ENCODE measurements at regions of chr7 and their contacts with region 1.

Region 1: DNA sequence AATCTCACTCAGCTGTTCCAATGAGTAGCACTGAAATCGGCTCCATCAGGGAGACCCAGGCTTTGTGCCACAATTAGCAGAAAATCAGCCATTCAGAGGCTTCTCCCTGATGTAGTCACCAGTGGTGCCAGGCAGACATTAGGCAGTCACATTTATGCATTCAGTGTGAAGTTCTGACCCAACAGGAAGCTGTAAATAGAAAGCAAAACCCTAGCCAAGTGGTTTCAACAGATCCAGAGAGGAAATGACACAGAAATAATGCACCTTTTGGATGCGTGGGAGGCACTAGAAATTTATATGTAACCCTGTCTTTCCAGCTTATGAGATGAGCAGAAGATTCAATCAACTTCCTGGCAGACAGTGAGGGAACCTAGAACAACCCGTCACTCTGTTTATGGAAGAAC is 186.4 kb downstream of the PDE1C start:
- DNase-seq: no peak
- ATAC-seq: no peak
- H3K4me3 ChIP-seq: no peak overlapping the region
- H3K27ac ChIP-seq: peak overlapping the region in 1 of 2 donors; percentile 48
- H3K4me1 ChIP-seq: no peaks in the 10 kb centered on the region
- H3K27me3 ChIP-seq: no peaks in the 10 kb centered on the region

Region 2: GRCh38 chr7:31613604-31614003 is 270.2 kb before region 1 on chr7:
- intact Hi-C with region 1: no loop called
- DNase-seq: no peak
- ATAC-seq: no peak
- H3K4me3 ChIP-seq: no peak overlapping the region
- H3K27ac ChIP-seq: no peak overlapping the region
- H3K4me1 ChIP-seq: no peaks in the 10 kb centered on the region
- H3K27me3 ChIP-seq: peaks cover 0 to 2% of the 10 kb centered on the region in 2 donors

Region 3: GRCh38 chr7:31971049-31971667 is 87.4 kb after region 1 on chr7:
- intact Hi-C with region 1: no loop called
- DNase-seq: no peak
- ATAC-seq: peak; percentile 48
- H3K4me3 ChIP-seq: no peak overlapping the region
- H3K27ac ChIP-seq: no peak overlapping the region
- H3K4me1 ChIP-seq: no peaks in the 10 kb centered on the region
- H3K27me3 ChIP-seq: no peaks in the 10 kb centered on the region

Region 4: DNA sequence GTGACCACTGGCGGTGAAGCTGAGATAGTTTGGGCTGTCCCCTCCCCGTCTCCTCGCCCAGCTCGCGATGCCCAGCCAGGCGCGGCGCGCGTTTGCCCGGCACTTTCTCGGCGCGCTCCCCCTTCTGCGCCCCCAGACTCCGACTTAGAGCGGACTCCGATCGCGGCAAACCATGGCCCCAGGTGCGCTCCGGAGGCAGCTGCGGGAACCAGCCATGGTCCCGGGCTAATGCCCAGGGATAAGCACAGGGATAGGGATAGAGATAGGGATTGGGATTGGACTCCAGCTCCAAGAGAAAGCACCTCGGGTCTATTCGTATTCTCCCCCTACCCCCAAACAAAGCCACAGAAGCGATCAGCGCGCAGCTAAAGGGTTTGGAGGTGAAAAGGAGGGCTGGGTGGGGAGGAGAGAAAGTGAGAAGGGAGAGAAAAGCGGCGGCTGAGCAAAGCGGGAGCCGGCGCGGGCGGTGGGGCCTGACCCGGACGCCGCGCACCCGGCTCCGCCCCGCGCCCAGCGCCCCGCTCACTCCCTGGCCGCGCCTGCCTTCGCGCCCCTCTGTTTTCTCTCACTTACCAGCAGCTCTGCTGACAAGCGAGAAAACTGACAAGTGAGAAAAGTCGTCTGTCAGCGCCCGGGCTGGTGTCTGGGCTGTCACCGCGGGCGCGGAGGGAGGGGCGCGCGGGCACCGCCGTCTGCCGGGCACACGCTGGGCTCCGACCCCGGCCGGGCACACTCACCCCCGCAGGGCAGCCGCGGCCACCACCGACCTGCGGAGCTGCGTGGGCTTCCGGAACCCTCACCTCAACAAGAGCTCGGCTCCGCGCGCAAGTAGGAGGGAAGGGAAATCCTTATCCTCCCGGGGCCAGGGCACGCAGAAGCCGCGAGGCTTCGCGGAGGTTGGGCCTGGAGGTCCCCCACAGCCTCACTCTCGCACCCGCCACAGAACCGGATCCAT is 186.9 kb after region 1 on chr7 and contains the start of gene PDE1C:
- intact Hi-C with region 1: loop called in 1 of 2 experiments (anchors 10 kb)
- DNase-seq: no peak
- ATAC-seq: no peak
- H3K4me3 ChIP-seq: peak within 1 kb of the TSS; percentile 10 to 51
- H3K27ac ChIP-seq: peak within 1 kb of the TSS in 1 of 2 donors; percentile 7
- H3K4me1 ChIP-seq: no peaks in the 10 kb centered on the region
- H3K27me3 ChIP-seq: no peaks in the 10 kb centered on the region
- total RNA-seq, gene PDE1C: 6.6 to 7.1 TPM

Region 5: DNA sequence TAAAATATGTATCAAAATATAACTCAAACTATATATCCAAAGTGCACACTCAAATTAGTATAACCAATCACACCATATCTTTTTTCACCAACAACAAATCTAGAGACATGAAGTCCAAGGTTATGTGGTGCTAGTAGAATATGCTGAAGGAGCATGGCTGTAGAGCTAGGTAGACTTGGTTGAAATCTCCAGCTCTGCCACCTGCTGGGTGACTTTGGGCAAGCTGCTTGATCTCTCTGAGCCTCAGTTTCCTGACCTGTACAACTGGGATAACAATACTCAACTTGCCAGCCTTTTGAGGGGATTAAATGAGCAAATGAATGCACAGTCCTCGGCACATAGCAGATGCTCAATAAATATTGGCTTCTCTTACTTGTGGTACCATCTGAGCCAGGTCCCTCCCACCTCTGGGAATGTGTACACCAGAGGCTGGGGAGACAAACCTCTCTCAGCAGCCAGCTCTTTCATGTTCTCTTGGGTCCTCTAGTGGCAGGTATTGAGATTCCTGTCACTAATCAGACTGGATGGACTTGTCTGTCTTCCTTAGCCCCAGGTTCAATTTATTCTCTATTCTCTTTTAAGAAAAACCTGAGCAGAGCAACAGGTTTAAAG is 280.7 kb after region 1 on chr7:
- intact Hi-C with region 1: loop called in 1 of 2 experiments (anchors 5 kb)
- DNase-seq: no peak
- ATAC-seq: no peak
- H3K4me3 ChIP-seq: no peak overlapping the region
- H3K27ac ChIP-seq: no peak overlapping the region
- H3K4me1 ChIP-seq: peaks cover 6 to 11% of the 10 kb centered on the region in 2 donors
- H3K27me3 ChIP-seq: no peaks in the 10 kb centered on the region